ENCODE measurements at regions of chr15 and their contacts with region 1.

Region 1: GRCh38 chr15:92021792-92022191 is 168.3 kb downstream of the SLCO3A1 start:
- DNase-seq: no peak
- ATAC-seq: no peak
- H3K4me3 ChIP-seq: no peak overlapping the region
- H3K4me3 Mint-ChIP-seq: no peak overlapping the region
- H3K27ac ChIP-seq: no peak overlapping the region
- H3K27ac Mint-ChIP-seq: no peak overlapping the region
- H3K4me1 ChIP-seq: peaks cover 18% of the 10 kb centered on the region
- H3K4me1 Mint-ChIP-seq: peaks cover 45% of the 10 kb centered on the region
- H3K27me3 ChIP-seq: no peaks in the 10 kb centered on the region
- H3K27me3 Mint-ChIP-seq: no peaks in the 10 kb centered on the region
- CTCF ChIP-seq: no peak

Region 2: GRCh38 chr15:91839867-91840266 is 181.9 kb before region 1 on chr15:
- CTCF ChIA-PET with region 1: no interaction called
- POLR2A ChIA-PET with region 1: no interaction called
- intact Hi-C with region 1: no loop called
- DNase-seq: no peak
- ATAC-seq: no peak
- H3K4me3 ChIP-seq: no peak overlapping the region
- H3K4me3 Mint-ChIP-seq: no peak overlapping the region
- H3K27ac ChIP-seq: no peak overlapping the region
- H3K27ac Mint-ChIP-seq: no peak overlapping the region
- H3K4me1 ChIP-seq: no peaks in the 10 kb centered on the region
- H3K4me1 Mint-ChIP-seq: no peaks in the 10 kb centered on the region
- H3K27me3 ChIP-seq: peaks cover 0 to 7% of the 10 kb centered on the region in 2 experiments
- H3K27me3 Mint-ChIP-seq: peaks cover 52% of the 10 kb centered on the region
- CTCF ChIP-seq: no peak

Region 3: GRCh38 chr15:92000709-92001108 is 21.1 kb before region 1 on chr15:
- CTCF ChIA-PET with region 1: no interaction called
- POLR2A ChIA-PET with region 1: interaction called, 3 read pairs
- intact Hi-C with region 1: loop called in 1 of 2 experiments (anchors 1 kb)
- DNase-seq: no peak
- ATAC-seq: no peak
- H3K4me3 ChIP-seq: no peak overlapping the region
- H3K4me3 Mint-ChIP-seq: no peak overlapping the region
- H3K27ac ChIP-seq: no peak overlapping the region
- H3K27ac Mint-ChIP-seq: no peak overlapping the region
- H3K4me1 ChIP-seq: peaks cover 17% of the 10 kb centered on the region
- H3K4me1 Mint-ChIP-seq: peaks cover 42% of the 10 kb centered on the region
- H3K27me3 ChIP-seq: no peaks in the 10 kb centered on the region
- H3K27me3 Mint-ChIP-seq: no peaks in the 10 kb centered on the region
- CTCF ChIP-seq: no peak